Heart left ventricle (tissue), 16 donors: ENCODE measurements at regions of chr20 and their contacts with region 1.

Region 1: GRCh38 chr20:5353624-5354496 is 37.1 kb upstream of the PROKR2 start:
- DNase-seq: no peak
- ATAC-seq: no peak
- H3K4me3 ChIP-seq: no peak overlapping the region
- H3K27ac ChIP-seq: no peak overlapping the region
- H3K4me1 ChIP-seq: no peaks in the 10 kb centered on the region
- H3K27me3 ChIP-seq: no peaks in the 10 kb centered on the region
- CTCF ChIP-seq: no peak
- POLR2A ChIP-seq: no peak

Region 2: GRCh38 chr20:3727401-3728021 is 1626.3 kb before region 1 on chr20:
- intact Hi-C with region 1: no loop called
- DNase-seq: peak in 2 of 5 donors; percentile 40 to 46
- ATAC-seq: peak; percentile 16 to 53 (median 44)
- H3K4me3 ChIP-seq: peak overlapping the region in 4 of 12 donors; percentile 8 to 28 (median 16)
- H3K27ac ChIP-seq: peak overlapping the region in 11 of 12 donors; percentile 33 to 96 (median 68)
- H3K4me1 ChIP-seq: peaks cover 0 to 51% (median 37%) of the 10 kb centered on the region in 12 donors
- H3K27me3 ChIP-seq: peaks cover 0 to 14% (median 0%) of the 10 kb centered on the region in 9 donors
- CTCF ChIP-seq: no peak
- POLR2A ChIP-seq: no peak

Region 3: DNA sequence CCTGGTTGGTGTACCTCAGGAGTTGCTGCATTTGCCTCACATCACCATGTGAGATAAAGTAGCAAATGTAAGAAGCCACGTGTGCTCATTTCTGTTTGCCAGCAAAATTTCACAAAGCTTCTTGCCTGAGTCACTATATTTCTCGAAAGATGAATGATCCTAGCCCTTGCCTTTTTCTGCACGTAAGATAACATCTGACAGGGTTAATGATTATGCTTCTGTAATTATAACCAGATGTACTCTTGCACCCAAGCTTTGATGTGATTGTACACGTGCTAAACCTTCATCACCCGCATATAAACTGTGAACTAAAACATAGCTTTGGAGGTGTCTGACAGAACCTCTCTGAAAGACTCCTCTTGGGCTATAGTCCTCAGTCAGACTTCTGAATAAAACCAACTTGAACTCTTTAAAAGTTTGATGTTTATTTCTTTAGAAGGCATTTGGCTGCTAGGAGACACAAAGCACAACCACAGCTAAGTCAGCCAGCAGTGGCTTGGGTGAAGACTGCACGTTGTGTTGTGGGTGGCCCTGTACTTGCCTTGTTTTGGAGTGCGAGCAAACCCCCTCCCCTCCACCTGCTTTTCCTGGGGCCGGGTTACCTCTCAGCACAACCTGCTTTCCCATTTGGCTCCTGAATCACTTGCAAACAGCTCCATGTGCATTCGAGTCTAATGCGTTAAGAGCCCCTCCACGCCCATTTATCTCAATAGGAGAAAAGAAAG is 56.4 kb before region 1 on chr20:
- intact Hi-C with region 1: loop called in 1 of 10 experiments (anchors 10 kb)
- DNase-seq: no peak
- ATAC-seq: no peak
- H3K4me3 ChIP-seq: no peak overlapping the region
- H3K27ac ChIP-seq: no peak overlapping the region
- H3K4me1 ChIP-seq: no peaks in the 10 kb centered on the region
- H3K27me3 ChIP-seq: no peaks in the 10 kb centered on the region
- CTCF ChIP-seq: no peak
- POLR2A ChIP-seq: no peak